ENCODE measurements at regions of chr10 and their contacts with region 1.

Region 1: DNA sequence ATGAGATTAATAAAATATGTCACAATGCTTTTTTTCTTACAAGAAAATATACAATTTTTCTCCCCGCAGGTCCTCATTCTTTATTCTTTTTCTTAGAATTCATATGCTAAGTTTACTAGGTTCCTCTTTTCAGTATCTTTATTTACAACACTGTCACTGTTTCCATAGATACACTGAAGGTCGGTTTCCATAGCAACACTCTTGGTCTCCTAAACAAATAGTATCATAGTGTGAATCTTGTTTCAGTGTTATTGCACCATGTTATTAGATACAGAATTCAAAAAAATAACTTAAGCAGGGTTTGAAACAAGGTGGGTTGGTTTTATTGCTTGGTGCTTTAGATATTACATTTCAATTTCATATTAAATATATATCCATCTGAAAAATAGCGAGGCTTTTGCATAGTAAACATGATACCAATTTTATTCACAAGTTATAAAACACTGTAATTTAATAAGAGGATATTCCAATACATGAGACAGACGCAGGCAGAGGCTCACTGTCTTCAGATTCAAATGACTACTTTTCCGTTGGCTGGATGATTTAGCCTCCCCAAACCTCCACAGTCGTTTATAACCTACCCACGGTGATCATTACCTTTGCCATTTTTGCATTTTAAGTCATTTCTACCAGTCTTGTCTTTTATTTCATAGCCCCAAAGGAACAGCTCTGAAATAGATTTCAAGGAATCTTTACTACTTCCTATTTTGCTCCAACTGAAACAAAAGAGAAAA is 88.9 kb upstream of the KLF6 start:
- DNase-seq: peak; percentile 79
- ATAC-seq: no peak
- H3K4me3 ChIP-seq: no peak overlapping the region
- H3K27ac ChIP-seq: peak overlapping the region; percentile 29
- H3K4me1 ChIP-seq: peaks cover 39% of the 10 kb centered on the region
- H3K27me3 ChIP-seq: no peaks in the 10 kb centered on the region; a peak in 1 of 5 replicates
- CTCF ChIP-seq: no peak
- EP300 ChIP-seq: peak in 1 of 2 experiments; percentile 43; a peak in 1 of 4 replicates
- POLR2A ChIP-seq: no peak
- RAD21 ChIP-seq: no peak

Region 2: GRCh38 chr10:4736608-4737007 is 862.7 kb after region 1 on chr10:
- CTCF ChIA-PET with region 1: no interaction called
- POLR2A ChIA-PET with region 1: no interaction called
- in situ Hi-C with region 1: no loop called
- intact Hi-C with region 1: loop called (anchors 5 kb)
- DNase-seq: no peak
- ATAC-seq: no peak
- H3K4me3 ChIP-seq: no peak overlapping the region
- H3K27ac ChIP-seq: no peak overlapping the region
- H3K4me1 ChIP-seq: peaks cover 10% of the 10 kb centered on the region; the same call in 1 of the 2 replicates
- H3K27me3 ChIP-seq: no peaks in the 10 kb centered on the region; a peak in 1 of 5 replicates
- CTCF ChIP-seq: no peak
- EP300 ChIP-seq: no peak
- POLR2A ChIP-seq: no peak
- RAD21 ChIP-seq: no peak